Activated CD8-positive, alpha-beta memory T cell treated with anti-CD3 and anti-CD28 coated beads, Interleukin-2, amount 10 ng/mL, durations not matched to agents 7 days and 5 days (primary cell): ENCODE measurements at regions of chr20 and their contacts with region 1.

Region 1: DNA sequence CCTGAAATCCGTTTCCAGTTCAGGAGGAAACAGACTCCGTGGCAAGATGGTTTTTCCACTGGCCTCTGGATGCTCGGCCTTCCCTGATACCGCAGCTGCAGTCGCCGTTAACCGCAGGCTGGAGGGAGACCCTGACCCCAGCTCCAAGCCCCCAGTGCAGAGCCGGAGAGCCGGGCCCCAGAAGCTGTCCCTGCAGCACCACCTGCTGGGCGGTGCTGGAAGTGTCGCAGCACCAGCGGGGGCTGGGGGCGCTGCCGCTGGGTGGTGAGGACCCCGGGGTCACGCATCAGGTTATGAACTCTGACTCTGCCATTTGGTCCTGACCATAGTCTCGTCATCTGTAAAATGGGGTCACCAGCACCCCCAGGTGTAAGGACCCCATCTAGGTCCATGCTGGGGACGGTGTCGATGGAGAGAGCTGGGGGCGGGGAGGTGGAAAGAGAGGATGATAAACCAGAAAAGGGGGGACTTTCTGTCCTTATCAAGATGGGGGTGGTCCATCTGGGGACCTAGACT is 20.7 kb upstream of the CHRNA4 start:
- DNase-seq: no peak
- ATAC-seq: no peak
- H3K4me3 Mint-ChIP-seq: no peak overlapping the region
- H3K27ac Mint-ChIP-seq: no peak overlapping the region
- H3K4me1 Mint-ChIP-seq: no peaks in the 10 kb centered on the region
- H3K27me3 Mint-ChIP-seq: peaks cover 5% of the 10 kb centered on the region

Region 2: DNA sequence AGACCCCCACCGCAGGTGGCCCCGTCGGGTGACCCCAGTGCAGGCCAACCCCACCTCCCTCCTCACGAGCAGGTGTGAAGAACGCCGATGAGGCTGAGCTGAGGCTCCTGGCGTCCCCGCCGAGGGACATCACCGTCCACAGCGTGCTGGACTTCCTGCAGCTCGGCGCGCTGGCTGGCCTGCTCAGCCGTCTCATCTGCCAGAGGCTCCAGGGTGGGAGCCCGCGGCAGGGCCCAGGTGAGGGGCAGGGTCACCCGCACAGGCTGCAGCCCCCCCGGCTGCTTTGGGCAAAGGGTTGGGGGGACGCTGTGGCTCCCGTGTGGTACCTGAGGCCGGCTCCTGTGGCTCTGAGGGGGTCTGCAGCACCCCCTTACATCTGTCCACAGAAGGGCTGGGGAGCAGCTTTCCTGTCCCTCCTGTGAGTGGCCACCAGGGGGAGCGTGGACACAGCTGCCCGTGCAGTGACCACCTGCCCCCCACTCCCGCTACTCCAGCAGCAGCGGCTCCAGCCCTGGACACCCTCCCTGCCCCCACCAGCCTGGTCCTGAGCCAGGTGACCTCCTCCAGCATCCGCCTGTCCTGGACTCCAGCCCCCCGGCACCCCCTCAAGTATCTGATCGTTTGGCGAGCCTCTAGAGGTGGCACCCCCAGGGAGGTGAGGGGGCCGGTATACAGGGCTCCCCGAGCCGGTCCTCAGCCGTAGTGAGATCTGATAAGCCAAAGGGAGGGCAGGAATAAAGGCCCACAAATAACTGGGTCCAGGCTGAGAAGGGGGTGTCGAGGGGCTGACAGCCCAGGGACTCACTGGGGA is 72.4 kb before region 1 on chr20:
- CTCF ChIA-PET with region 1: interaction called, 26 read pairs
- DNase-seq: peak; percentile 43
- ATAC-seq: no peak
- H3K4me3 Mint-ChIP-seq: no peak overlapping the region
- H3K27ac Mint-ChIP-seq: no peak overlapping the region
- H3K4me1 Mint-ChIP-seq: no peaks in the 10 kb centered on the region
- H3K27me3 Mint-ChIP-seq: no peaks in the 10 kb centered on the region